HepG2 (cell line): ENCODE measurements at regions of chr9 and their contacts with region 1.

Region 1: DNA sequence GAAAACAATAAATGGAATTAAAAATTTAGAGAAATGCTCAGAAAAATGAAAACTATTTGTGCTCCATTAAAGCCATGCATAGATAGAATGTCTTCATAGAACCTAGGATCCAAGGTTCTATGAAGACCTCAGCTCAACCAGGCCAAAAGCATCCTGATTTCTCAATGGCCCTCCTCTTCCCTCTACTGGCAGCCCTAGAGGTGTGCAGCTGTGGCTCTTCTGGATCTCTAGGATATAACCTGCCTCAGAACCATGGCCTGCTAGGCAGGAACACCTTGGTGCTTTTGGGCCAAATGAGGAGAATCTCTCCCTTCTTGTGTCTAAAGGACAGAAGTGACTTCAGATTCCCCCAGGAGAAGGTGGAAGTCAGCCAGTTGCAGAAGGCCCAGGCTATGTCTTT is 15.1 kb downstream of the IFNA1 start:
- DNase-seq: peak; percentile 17
- ATAC-seq: peak; percentile 98
- H3K4me3 ChIP-seq: no peak overlapping the region
- H3K27ac ChIP-seq: no peak overlapping the region
- H3K4me1 ChIP-seq: no peaks in the 10 kb centered on the region
- H3K27me3 ChIP-seq: no peaks in the 10 kb centered on the region
- CTCF ChIP-seq: peak; percentile 61
- EP300 ChIP-seq: no peak
- POLR2A ChIP-seq: no peak
- RAD21 ChIP-seq: peak; percentile 24; the same call in 1 of the 2 replicates

Region 2: DNA sequence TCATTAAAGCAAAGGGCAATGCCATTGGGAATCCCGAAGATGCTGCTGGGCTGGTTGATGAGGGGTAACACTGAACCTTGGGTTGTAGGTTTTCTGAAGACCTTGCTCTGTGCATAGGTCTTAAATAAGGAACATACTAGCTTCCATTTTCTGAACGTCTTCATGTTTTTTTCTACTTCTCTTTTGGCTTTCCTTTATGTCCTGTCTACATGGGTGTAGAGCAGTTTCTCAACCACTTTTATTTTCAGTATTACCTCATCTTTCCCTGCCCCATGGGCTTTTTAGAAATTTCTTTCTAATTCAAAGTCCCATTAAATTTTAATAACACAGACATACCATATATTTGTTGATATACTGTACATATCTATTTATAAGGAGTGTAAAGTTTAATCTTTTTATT is 215.4 kb before region 1 on chr9 and contains the start of gene IFNA14:
- CTCF ChIA-PET with region 1: no interaction called
- POLR2A ChIA-PET with region 1: no interaction called
- in situ Hi-C with region 1: no loop called
- intact Hi-C with region 1: loop called (anchors 1 kb)
- DNase-seq: no peak
- ATAC-seq: no peak
- H3K4me3 ChIP-seq: no peak within 1 kb of the TSS
- H3K27ac ChIP-seq: no peak within 1 kb of the TSS
- H3K4me1 ChIP-seq: no peaks in the 10 kb centered on the region
- H3K27me3 ChIP-seq: no peaks in the 10 kb centered on the region
- CTCF ChIP-seq: no peak
- EP300 ChIP-seq: no peak
- POLR2A ChIP-seq: no peak
- RAD21 ChIP-seq: no peak
- total RNA-seq, gene IFNA14: not detected in 2 replicates

Region 3: GRCh38 chr9:21317956-21318923 is 137.1 kb before region 1 on chr9:
- CTCF ChIA-PET with region 1: no interaction called
- POLR2A ChIA-PET with region 1: no interaction called
- in situ Hi-C with region 1: loop called (anchors 5 kb)
- intact Hi-C with region 1: loop called (anchors 1 kb)
- DNase-seq: peak; percentile 24
- ATAC-seq: peak; percentile 92
- H3K4me3 ChIP-seq: no peak overlapping the region
- H3K27ac ChIP-seq: no peak overlapping the region
- H3K4me1 ChIP-seq: no peaks in the 10 kb centered on the region
- H3K27me3 ChIP-seq: no peaks in the 10 kb centered on the region
- CTCF ChIP-seq: peak; percentile 70
- EP300 ChIP-seq: no peak
- POLR2A ChIP-seq: no peak
- RAD21 ChIP-seq: no peak

Region 4: DNA sequence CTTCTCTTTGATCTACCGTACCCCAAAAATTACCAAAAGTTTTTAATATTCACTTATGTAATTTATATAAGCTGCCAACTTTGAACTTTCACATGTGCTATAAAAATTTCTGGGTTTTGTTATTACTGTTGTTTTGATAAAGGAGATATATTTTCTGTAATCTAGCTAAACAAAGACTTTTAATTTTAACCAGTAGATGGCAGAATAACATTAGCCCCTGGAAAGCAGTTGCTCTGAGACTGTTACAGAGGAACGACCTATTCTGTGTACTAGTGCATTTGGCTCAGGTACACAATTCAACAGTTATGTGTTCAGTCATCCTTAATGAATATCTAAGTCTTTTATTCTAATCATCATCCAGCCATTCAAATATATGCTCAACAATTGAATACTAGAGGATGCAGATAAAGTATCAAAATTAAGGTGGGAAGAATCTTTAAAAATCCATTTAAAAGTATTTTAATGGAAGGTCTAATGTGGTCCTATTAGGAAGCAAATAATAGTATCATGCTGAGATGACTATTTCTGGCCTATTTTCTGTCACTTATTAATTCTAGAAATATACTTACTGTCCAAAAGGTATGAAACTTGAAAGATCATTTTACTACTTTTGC is 128.7 kb before region 1 on chr9:
- CTCF ChIA-PET with region 1: interaction called, 5 read pairs
- POLR2A ChIA-PET with region 1: no interaction called
- in situ Hi-C with region 1: no loop called
- intact Hi-C with region 1: loop called (anchors 1 kb)
- DNase-seq: peak; percentile 39
- ATAC-seq: peak; percentile 90
- H3K4me3 ChIP-seq: no peak overlapping the region
- H3K27ac ChIP-seq: no peak overlapping the region
- H3K4me1 ChIP-seq: peaks cover 3% of the 10 kb centered on the region; the same call in 1 of the 2 replicates
- H3K27me3 ChIP-seq: no peaks in the 10 kb centered on the region
- CTCF ChIP-seq: peak; percentile 66
- EP300 ChIP-seq: no peak
- POLR2A ChIP-seq: no peak
- RAD21 ChIP-seq: 0 out of 2 replicates have a peak, but pooled peaks have one; percentile 21

Region 5: DNA sequence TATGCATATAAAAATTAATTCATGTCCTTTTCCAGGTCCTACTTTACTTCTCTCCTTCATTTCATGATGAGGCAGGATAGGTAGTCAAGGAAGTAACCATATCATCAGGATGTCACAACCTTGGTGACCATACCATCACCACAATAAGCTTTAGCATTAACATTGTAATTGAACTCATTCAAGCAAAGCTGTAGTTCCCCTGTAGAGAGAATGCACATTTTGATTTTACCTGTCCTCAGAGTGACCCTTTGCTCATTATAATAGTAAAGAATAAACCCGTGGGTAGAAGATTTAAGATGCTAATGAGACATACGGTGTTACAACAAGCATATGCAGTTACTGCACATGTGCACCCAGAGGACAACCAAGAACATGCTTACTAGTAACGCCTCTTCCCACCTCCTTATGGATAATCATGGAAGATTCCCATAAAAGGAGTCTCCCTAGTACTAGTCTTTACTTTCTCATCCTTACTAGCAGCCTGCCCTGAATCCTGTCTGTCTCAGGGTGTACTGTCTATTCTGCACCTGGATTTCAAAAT is 106.8 kb before region 1 on chr9:
- CTCF ChIA-PET with region 1: no interaction called
- POLR2A ChIA-PET with region 1: no interaction called
- in situ Hi-C with region 1: no loop called
- intact Hi-C with region 1: no loop called
- DNase-seq: no peak
- ATAC-seq: no peak
- H3K4me3 ChIP-seq: no peak overlapping the region
- H3K27ac ChIP-seq: no peak overlapping the region
- H3K4me1 ChIP-seq: no peaks in the 10 kb centered on the region
- H3K27me3 ChIP-seq: no peaks in the 10 kb centered on the region
- CTCF ChIP-seq: no peak
- EP300 ChIP-seq: no peak
- POLR2A ChIP-seq: no peak
- RAD21 ChIP-seq: no peak

Region 6: DNA sequence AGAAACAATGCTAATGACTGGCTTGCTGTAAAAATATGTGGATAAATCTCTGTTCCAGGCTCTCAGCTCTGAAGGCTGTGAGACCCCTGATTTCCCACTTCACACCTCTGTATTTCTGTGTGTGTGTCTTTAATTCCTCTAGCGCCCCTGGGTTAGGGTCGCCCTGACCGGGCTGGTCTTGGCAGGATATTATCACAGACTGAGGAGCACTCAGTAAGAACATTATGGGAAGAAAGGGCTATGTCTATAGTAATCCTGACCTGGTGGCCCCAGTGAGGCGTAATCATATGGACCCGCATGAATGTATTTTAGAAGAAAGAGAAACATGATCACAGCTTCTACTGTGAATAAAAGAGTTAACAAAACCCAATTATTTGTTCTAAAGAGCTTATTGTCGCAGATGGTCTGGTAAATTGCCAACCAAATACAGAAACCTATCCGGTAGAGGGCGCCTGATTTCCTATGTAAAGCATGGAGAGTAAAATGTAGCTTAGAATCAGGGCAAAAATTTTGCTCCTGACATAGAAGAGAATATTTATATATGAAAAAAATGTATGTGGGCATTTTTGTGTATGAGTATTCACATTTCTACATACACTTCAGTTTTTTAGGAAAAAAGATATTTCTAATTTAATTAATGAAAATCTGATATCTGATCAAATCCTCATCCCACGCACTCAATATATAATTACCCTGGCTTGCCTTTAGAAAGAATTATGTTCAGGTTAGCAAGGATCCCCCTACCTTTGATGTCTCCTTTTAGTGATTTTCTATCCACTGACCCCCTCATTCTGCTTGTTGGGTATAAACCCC is 20.9 kb before region 1 on chr9:
- CTCF ChIA-PET with region 1: interaction called, 4 read pairs
- POLR2A ChIA-PET with region 1: no interaction called
- in situ Hi-C with region 1: no loop called
- intact Hi-C with region 1: loop called (anchors 2 kb)
- DNase-seq: peak; percentile 52
- ATAC-seq: peak; percentile 54; the same call in 1 of the 3 replicates
- H3K4me3 ChIP-seq: no peak overlapping the region
- H3K27ac ChIP-seq: no peak overlapping the region
- H3K4me1 ChIP-seq: no peaks in the 10 kb centered on the region
- H3K27me3 ChIP-seq: no peaks in the 10 kb centered on the region
- CTCF ChIP-seq: peak; percentile 44
- EP300 ChIP-seq: no peak
- POLR2A ChIP-seq: no peak
- RAD21 ChIP-seq: no peak